ENCODE measurements at regions of chr19 and their contacts with region 1.

Region 1: GRCh38 chr19:35134601-35135242 is at the start of gene LGI4:
- DNase-seq: no peak
- H3K4me3 ChIP-seq: peak within 1 kb of the TSS; percentile 18 to 58 (median 30)
- H3K27ac ChIP-seq: peak within 1 kb of the TSS; percentile 52 to 91
- H3K4me1 ChIP-seq: no peaks in the 10 kb centered on the region
- H3K27me3 ChIP-seq: no peaks in the 10 kb centered on the region
- CTCF ChIP-seq: no peak
- POLR2A ChIP-seq: no peak
- total RNA-seq, gene LGI4: 4.3 to 37.8 (median 5.3) TPM

Region 2: DNA sequence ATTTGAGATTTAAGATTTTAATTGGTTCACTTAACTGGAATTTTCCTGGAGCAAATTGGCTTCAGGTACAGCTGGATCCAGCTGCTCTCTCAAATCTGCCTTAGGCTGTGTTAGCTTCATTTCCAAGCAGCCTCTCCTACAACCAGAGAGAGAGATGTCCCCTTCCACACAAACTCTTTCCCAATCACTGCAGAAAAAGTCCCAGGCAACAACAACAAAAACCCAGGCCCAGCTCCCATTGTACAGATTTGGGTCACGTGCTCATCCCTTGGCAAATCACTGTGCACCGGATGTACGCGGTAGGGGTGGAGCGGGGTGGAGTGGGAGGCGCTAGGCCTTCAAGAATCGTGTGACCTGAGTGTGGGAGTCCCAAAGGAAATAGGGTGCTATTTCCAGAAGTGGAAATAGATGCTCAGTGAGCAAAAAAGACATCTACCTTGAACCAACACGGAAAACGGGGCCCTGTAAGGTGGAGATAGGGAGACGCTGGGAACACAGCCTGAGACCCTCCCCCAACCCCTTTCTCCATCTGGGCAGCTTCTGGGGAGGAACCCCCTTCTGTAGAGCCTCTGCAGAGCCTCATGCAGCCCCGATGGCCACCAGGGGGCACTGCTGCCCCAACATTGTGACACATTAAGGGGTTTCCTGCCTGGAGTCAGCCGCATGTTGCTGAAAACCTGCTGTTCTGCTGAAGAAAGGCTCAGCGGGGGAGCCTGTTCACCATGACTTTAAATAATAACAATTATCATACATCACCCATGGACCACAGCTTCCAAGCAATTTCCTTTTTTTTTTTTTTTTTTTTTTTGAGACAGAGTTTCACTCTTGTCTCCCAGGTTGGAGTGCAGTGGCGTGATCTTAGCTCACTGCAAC is 67.8 kb before region 1 on chr19:
- intact Hi-C with region 1: loop called (anchors 5 kb)
- DNase-seq: peak; percentile 78 to 85
- H3K4me3 ChIP-seq: no peak overlapping the region
- H3K27ac ChIP-seq: no peak overlapping the region
- H3K4me1 ChIP-seq: no peaks in the 10 kb centered on the region
- H3K27me3 ChIP-seq: no peaks in the 10 kb centered on the region
- CTCF ChIP-seq: peak; percentile 81 to 94 (median 91)
- POLR2A ChIP-seq: no peak

Region 3: DNA sequence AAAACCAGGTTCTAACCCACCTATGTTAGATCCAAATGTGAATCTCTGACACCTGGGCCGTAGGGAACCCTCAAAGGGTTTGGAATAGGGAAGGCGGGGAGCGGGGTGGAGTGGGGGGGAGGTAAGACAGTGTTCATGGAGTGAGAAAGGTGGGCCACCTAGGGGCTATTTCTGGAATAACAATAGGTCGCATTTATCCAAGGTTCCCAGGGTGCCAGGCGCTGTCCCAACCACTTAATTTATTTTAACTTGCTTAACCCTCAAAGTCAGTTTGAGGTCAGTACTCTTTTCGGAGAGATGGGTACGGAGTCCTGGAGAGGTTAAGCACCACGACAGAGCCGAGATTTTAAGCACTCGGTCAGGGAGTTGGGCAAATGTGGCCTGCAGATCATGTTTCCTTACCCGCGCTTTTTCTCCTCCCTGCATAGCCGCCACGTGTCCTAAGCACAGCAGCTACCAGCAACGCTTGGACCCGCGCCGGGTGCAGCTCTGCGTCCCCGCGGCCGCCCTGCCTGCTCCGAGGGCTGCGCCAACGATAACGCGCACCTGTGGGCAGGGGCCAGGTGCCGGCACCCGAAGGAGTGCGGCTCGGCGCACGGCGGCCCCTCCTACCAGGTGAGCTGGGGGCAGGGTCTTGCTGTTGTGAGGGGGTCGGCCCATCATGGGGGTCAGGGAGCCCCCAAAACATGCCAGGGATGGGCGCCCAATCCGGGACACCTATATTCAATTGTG is 44.0 kb before region 1 on chr19:
- intact Hi-C with region 1: no loop called
- DNase-seq: peak in 1 of 2 donors; percentile 67
- H3K4me3 ChIP-seq: peak overlapping the region in 2 of 3 donors; percentile 37 to 51
- H3K27ac ChIP-seq: no peak overlapping the region
- H3K4me1 ChIP-seq: no peaks in the 10 kb centered on the region
- H3K27me3 ChIP-seq: no peaks in the 10 kb centered on the region
- CTCF ChIP-seq: peak; percentile 54 to 77 (median 64)
- POLR2A ChIP-seq: no peak

Region 4: GRCh38 chr19:35107546-35107945 is 27.2 kb before region 1 on chr19:
- intact Hi-C with region 1: loop called (anchors 1 kb)
- DNase-seq: peak; percentile 78 to 92
- H3K4me3 ChIP-seq: no peak overlapping the region
- H3K27ac ChIP-seq: peak overlapping the region; percentile 84 to 90
- H3K4me1 ChIP-seq: peaks cover 2 to 18% of the 10 kb centered on the region in 2 donors
- H3K27me3 ChIP-seq: no peaks in the 10 kb centered on the region
- CTCF ChIP-seq: no peak
- POLR2A ChIP-seq: no peak

Region 5: DNA sequence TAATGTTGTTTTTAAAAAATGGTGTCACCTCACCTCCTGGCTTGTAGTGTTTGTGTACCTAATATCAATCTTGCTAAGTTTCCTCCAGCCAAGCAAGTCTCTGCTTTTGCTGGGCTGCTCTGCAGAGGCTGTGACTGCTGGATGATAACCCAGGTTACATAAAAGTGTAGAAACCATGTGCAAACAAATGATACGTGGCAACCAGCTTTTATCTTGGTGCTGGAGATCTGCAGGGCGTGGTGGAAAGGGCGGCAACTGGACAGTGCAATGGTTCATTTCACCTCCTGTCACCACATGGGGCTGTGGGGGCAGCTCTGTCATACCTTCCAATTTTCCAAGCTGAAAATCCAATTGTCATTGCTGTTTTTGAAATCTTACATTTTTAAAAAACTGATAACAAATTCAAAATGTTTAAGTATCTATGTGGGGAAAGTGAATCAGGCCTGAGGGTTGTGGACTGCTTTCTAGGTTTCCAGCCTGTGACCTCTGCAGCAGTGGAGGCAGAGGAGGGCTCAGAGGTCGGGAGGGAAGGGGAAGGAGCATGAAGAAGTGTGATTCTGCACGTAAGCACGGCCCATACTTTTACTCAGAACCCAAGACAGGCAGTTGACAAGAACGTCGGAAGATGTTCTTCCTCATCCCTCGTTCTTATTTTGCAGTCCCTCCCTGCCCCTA is 245.9 kb after region 1 on chr19:
- intact Hi-C with region 1: no loop called
- DNase-seq: no peak
- H3K4me3 ChIP-seq: no peak overlapping the region
- H3K27ac ChIP-seq: no peak overlapping the region
- H3K4me1 ChIP-seq: no peaks in the 10 kb centered on the region
- H3K27me3 ChIP-seq: no peaks in the 10 kb centered on the region
- CTCF ChIP-seq: no peak
- POLR2A ChIP-seq: no peak